ENCODE measurements at regions of chr18 and their contacts with region 1.

Region 1: DNA sequence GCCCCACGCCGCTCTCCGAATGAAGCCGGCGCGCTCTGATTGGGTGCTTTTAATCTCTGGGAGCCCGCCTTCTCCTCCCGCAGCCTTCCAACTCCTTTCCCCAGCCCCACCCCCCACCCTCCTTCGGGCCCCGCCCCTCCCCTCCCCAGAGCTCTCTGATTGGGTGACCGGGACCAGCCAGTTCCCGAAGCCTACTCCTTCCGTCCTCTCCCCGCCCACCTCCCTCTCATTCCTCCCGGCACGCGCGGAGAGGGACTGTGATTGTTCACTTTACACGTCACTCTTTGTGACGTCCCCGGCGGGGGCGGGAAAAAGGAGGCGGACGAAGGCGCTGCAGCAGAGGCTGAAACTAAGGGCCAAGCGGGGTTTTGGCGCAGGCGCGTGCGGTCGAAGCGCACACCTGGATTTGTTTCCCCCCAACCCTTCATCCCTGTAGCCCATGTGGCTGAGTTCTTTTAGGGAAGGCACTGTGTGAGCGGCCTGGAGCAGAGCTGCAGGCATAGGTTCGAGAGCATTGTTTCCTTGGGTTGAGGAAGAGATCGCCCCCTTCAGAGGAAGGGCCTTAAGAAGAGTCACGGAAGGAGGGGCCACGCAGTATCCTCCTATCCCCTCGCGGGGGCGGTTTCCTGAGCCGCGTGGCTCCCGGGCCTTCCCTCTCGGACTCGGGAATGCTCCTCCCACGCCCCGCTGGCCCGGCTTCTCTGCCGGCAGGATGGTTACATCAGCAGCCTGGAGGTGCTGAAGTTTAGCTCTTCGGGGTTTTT is at the start of gene MEX3C:
- DNase-seq: peak; percentile 98
- ATAC-seq: peak; percentile 84
- H3K4me3 Mint-ChIP-seq: peak within 1 kb of the TSS; percentile 94
- H3K27ac Mint-ChIP-seq: peak within 1 kb of the TSS; percentile 97
- H3K4me1 Mint-ChIP-seq: peaks cover 24% of the 10 kb centered on the region
- H3K27me3 Mint-ChIP-seq: no peaks in the 10 kb centered on the region
- total RNA-seq, gene MEX3C: 53.3 to 60.7 TPM

Region 2: GRCh38 chr18:51153659-51154371 is 44.0 kb before region 1 on chr18:
- POLR2A ChIA-PET with region 1: interaction called, 64 read pairs
- DNase-seq: peak; percentile 68
- ATAC-seq: peak; percentile 67
- H3K4me3 Mint-ChIP-seq: peak overlapping the region; percentile 86
- H3K27ac Mint-ChIP-seq: peak overlapping the region; percentile 97
- H3K4me1 Mint-ChIP-seq: peaks cover 31% of the 10 kb centered on the region
- H3K27me3 Mint-ChIP-seq: no peaks in the 10 kb centered on the region

Region 3: GRCh38 chr18:51171223-51171622 is 26.6 kb before region 1 on chr18:
- POLR2A ChIA-PET with region 1: interaction called, 20 read pairs
- DNase-seq: no peak
- ATAC-seq: peak; percentile 34
- H3K4me3 Mint-ChIP-seq: no peak overlapping the region
- H3K27ac Mint-ChIP-seq: peak overlapping the region; percentile 48
- H3K4me1 Mint-ChIP-seq: peaks cover 45% of the 10 kb centered on the region
- H3K27me3 Mint-ChIP-seq: no peaks in the 10 kb centered on the region

Region 4: DNA sequence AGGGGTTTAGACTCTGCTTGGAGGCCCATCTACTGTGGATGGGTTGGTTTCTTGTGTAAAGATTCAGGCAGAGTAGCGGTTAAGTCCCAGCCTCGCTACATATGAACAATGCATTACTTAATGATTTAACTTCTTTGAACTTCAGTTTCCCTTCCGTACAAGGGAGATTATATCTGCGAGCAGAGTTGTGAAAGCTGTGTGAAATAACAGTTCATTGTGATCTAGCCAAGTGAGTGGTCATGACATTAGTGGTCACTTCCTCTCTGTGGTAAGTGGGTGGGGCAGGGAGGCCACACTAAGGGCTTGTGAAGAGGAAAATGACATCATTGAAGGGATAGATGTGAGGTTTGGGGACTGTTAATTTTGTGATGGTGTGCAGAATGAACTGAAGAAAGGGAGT is 13.7 kb after region 1 on chr18:
- POLR2A ChIA-PET with region 1: interaction called, 31 read pairs
- DNase-seq: peak; percentile 64
- ATAC-seq: peak; percentile 96
- H3K4me3 Mint-ChIP-seq: peak overlapping the region; percentile 46
- H3K27ac Mint-ChIP-seq: peak overlapping the region; percentile 83
- H3K4me1 Mint-ChIP-seq: peaks cover 19% of the 10 kb centered on the region
- H3K27me3 Mint-ChIP-seq: peaks cover 5% of the 10 kb centered on the region